Panc1 (cell line): ENCODE measurements at regions of chr10 and their contacts with region 1.

Region 1: DNA sequence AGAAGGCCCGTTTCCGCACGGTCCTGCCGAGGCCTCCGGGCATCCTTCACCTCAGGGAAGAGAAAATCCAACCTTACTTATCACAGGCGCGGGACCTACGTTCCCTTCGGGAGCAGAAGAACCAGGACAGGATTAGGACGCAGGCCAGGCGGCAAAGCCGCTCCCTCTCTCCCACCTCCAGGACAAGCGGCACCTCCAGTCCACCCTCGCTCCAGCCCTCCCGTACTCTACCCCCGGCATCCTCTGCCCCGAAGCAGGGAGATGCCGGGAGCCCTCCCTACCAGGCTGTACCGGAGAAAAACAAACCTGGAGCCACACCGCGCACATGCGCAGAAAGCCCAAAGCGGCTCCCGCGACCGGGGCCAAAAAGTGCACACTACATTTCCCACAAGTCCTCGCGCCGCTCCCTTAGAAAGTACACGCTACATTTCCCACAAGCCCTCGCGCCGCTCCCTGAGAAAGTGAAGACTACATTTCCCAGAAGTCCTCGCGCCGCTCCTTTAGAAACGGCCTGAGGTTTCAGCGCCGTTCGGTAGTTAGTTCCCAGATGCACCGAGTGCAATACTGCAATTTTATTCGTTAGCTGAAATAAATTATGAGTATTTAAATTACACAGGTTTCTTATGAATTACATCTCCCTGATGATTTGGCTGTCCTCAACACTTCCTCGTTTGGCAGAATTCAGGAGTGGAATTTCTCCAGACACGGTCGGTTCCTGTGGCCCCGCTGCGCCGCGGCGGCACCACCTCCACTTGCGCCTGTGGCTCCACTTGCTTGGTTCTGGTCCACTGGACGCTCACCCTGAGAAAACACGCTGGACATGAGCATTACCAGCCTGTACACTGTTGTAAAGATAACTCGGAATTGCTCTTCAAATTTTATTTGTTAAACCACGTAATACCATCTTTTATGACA is 85.6 kb downstream of the ZNF33B start:
- DNase-seq: peak; percentile 90
- ATAC-seq: peak; percentile 96
- H3K4me3 ChIP-seq: peak overlapping the region; percentile 57 to 94
- H3K27ac ChIP-seq: peak overlapping the region; percentile 82
- H3K4me1 ChIP-seq: 0 out of 2 replicates have a peak, but pooled peaks cover 6% of the 10 kb centered on the region
- H3K27me3 ChIP-seq: no peaks in the 10 kb centered on the region; the same call in 1 of the 2 replicates
- CTCF ChIP-seq: no peak

Region 2: GRCh38 chr10:42638055-42638820 is 85.5 kb after region 1 on chr10 and contains the start of gene ZNF33B:
- CTCF ChIA-PET with region 1: no interaction called
- POLR2A ChIA-PET with region 1: no interaction called
- in situ Hi-C with region 1: no loop called
- intact Hi-C with region 1: loop called (anchors 10 kb)
- DNase-seq: peak; percentile 95
- ATAC-seq: peak; percentile 97
- H3K4me3 ChIP-seq: peak within 1 kb of the TSS; percentile 65 to 80
- H3K27ac ChIP-seq: peak within 1 kb of the TSS; percentile 95
- H3K4me1 ChIP-seq: peaks cover 10% of the 10 kb centered on the region
- H3K27me3 ChIP-seq: no peaks in the 10 kb centered on the region
- CTCF ChIP-seq: no peak
- total RNA-seq, gene ZNF33B: 25.1 TPM

Region 3: DNA sequence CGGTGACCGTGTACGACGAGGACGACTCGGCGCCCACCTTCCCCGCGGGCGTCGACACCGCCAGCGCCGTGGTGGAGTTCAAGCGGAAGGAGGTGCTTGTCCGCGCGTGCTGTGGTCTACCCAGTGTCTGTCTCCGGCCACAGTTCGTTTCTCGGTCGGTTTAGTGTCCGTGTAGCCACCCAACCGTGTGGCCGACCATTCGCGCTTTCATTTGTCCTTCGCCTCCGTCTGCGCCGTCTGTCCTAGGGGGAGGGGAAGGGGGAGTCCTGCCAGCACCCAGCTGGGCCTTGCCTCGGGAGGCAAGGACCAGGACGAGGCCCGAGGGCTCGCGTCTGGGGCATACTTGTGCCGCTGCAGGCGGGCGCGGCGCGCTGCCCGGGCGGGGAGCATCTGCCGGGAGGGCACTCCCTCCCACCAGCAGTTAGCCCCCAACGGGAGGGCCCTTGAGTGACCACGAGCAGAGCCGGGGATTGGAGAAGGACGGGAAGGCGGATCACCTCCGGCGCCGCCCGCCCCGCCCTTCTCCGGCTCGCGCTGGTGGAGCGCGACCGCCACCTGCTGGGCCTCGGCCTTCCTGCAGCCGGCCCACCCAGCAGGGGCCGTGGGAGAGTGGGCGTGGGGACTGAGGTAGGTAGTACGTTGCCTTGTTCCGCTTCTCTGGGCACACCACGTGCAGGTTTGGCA is 552.5 kb after region 1 on chr10:
- CTCF ChIA-PET with region 1: no interaction called
- POLR2A ChIA-PET with region 1: no interaction called
- in situ Hi-C with region 1: no loop called
- intact Hi-C with region 1: loop called (anchors 5 kb)
- DNase-seq: peak; percentile 45
- ATAC-seq: peak; percentile 91
- H3K4me3 ChIP-seq: peak overlapping the region; percentile 55 to 68
- H3K27ac ChIP-seq: peak overlapping the region; percentile 75
- H3K4me1 ChIP-seq: peaks cover 16% of the 10 kb centered on the region
- H3K27me3 ChIP-seq: no peaks in the 10 kb centered on the region
- CTCF ChIP-seq: peak; percentile 100